Adrenal gland (tissue), 19 donors: ENCODE measurements at regions of chr2 and their contacts with region 1.

Region 1: GRCh38 chr2:190382851-190383250 is 25.3 kb upstream of the MFSD6 start:
- DNase-seq: peak in 5 of 7 donors; percentile 29 to 62 (median 52)
- H3K4me3 ChIP-seq: no peak overlapping the region
- H3K27ac ChIP-seq: no peak overlapping the region
- H3K4me1 ChIP-seq: no peaks in the 10 kb centered on the region
- H3K27me3 ChIP-seq: no peaks in the 10 kb centered on the region
- CTCF ChIP-seq: peak; percentile 16 to 74 (median 65)
- POLR2A ChIP-seq: no peak

Region 2: DNA sequence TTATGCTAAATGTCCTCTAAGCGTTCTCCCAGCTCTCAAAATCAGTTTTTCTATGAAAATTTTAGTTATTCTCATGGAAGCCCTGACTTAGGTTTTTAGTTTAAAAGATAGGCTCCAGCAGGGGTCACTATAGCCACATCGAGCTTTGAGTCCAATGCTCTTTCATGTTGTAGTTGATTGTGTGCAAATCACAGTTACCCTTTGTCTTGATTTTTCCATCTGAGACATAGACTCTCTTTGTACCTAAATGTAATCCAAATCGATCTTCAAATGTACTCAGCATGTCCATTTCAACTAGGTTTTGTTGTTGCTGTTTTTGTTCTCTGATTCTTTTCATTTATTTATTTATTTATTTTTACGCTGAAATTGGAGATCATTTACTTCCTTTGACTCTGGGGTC is 293.9 kb before region 1 on chr2:
- intact Hi-C with region 1: loop called in 1 of 2 experiments (anchors 10 kb)
- DNase-seq: peak; percentile 38 to 75 (median 52)
- H3K4me3 ChIP-seq: no peak overlapping the region
- H3K27ac ChIP-seq: no peak overlapping the region
- H3K4me1 ChIP-seq: peaks cover 0 to 15% of the 10 kb centered on the region in 2 donors
- H3K27me3 ChIP-seq: no peaks in the 10 kb centered on the region
- CTCF ChIP-seq: peak; percentile 64 to 82 (median 72)
- POLR2A ChIP-seq: no peak

Region 3: DNA sequence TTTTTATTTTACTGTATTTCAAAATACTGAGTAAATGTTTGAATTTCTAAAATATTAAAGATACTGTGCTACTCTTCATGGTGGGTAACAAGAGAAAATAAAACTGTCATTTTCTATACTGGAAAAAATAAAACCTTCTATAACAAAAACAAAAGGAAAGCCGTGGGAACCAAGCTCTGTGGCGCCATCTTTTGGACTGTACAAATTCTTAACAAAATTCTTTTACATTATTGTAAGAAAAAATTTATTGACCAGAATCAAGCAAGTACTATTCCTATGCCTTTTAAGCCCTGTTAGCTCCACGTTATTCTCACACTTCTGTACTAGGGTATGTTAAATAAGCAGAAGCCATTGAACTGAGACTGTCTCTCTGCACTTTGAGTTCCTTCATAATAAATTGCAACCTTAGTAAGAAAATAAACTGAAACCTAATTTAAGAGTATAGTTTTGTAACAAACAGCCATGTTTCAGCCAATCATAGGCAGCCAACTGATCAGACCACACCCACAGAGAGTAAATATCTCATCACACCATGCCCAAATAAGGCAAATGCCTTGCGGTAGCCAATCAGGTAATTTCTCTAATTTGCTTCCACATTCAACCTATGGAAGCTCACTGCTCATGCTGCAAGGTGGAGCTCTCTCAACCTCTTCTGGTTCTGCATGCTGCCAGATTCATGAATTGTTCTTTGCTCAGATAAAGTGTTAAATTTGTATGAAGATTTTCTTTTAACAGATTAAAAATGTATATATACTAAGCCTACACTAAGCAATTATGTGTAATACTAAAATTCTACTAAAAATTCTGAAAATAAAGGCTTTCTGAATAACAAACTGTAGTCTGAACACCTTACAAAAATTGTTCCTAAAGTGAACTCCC is 105.4 kb before region 1 on chr2:
- intact Hi-C with region 1: no loop called
- DNase-seq: peak in 3 of 7 donors; percentile 25 to 62 (median 49)
- H3K4me3 ChIP-seq: no peak overlapping the region
- H3K27ac ChIP-seq: no peak overlapping the region
- H3K4me1 ChIP-seq: peaks cover 0 to 5% of the 10 kb centered on the region in 2 donors
- H3K27me3 ChIP-seq: no peaks in the 10 kb centered on the region
- CTCF ChIP-seq: peak; percentile 32 to 65 (median 50)
- POLR2A ChIP-seq: no peak

Region 4: GRCh38 chr2:190319555-190320498 is 63.0 kb before region 1 on chr2 and contains the start of gene HIBCH:
- intact Hi-C with region 1: loop called in 1 of 2 experiments (anchors 10 kb)
- DNase-seq: peak; percentile 98 to 99 (median 98)
- H3K4me3 ChIP-seq: peak within 1 kb of the TSS in 2 of 4 donors; percentile 77 to 85
- H3K27ac ChIP-seq: peak within 1 kb of the TSS; percentile 23 to 98 (median 86)
- H3K4me1 ChIP-seq: peaks cover 17 to 27% of the 10 kb centered on the region in 2 donors
- H3K27me3 ChIP-seq: no peaks in the 10 kb centered on the region
- CTCF ChIP-seq: peak; percentile 62 to 79 (median 70)
- POLR2A ChIP-seq: peak; percentile 43 to 92
- total RNA-seq, gene HIBCH: 35.1 to 174 (median 68.6) TPM

Region 5: DNA sequence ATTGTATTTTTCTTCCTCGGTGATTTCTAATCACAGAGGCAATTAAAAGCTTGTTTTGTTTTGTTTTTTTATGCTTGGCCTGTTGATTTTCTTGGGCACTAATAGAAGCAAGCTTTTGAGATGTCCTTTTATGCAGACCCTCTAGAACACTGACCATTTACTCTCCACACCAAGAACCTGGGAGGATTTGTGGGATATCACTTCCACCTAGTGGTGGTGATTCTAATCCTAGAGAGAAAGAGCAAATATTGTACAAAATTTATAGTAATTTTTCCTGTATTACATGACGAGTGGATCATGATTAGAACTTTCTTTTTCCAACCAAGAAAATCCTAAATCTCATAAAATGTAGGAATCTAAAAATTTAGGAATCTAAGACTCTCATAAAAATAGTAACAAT is 128.3 kb after region 1 on chr2:
- intact Hi-C with region 1: loop called (anchors 5 to 10 kb)
- DNase-seq: no peak
- H3K4me3 ChIP-seq: no peak overlapping the region
- H3K27ac ChIP-seq: no peak overlapping the region
- H3K4me1 ChIP-seq: peaks cover 0 to 14% of the 10 kb centered on the region in 2 donors
- H3K27me3 ChIP-seq: no peaks in the 10 kb centered on the region
- CTCF ChIP-seq: peak; percentile 33 to 69 (median 55)
- POLR2A ChIP-seq: no peak

Region 6: DNA sequence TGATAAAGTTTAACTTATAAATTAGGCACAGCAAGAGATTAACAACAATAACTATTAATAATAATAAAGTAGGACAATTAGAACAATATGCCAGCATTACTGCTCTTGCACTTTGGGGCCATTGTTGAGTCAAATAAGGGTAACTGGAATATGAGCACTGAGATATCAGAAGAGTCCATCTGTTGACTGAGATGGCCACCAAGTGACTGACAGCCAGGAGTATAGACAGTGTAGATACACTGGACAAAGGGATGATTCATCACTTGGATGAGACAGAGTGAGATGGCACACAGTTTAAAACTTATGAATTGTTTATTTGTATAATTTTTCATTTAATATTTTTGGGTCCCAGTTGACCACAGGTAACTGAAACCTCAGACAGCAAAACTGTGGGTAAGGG is 286.0 kb after region 1 on chr2:
- intact Hi-C with region 1: no loop called
- DNase-seq: no peak
- H3K4me3 ChIP-seq: no peak overlapping the region
- H3K27ac ChIP-seq: no peak overlapping the region
- H3K4me1 ChIP-seq: peaks cover 0 to 10% of the 10 kb centered on the region in 2 donors
- H3K27me3 ChIP-seq: no peaks in the 10 kb centered on the region
- CTCF ChIP-seq: no peak
- POLR2A ChIP-seq: no peak

Region 7: DNA sequence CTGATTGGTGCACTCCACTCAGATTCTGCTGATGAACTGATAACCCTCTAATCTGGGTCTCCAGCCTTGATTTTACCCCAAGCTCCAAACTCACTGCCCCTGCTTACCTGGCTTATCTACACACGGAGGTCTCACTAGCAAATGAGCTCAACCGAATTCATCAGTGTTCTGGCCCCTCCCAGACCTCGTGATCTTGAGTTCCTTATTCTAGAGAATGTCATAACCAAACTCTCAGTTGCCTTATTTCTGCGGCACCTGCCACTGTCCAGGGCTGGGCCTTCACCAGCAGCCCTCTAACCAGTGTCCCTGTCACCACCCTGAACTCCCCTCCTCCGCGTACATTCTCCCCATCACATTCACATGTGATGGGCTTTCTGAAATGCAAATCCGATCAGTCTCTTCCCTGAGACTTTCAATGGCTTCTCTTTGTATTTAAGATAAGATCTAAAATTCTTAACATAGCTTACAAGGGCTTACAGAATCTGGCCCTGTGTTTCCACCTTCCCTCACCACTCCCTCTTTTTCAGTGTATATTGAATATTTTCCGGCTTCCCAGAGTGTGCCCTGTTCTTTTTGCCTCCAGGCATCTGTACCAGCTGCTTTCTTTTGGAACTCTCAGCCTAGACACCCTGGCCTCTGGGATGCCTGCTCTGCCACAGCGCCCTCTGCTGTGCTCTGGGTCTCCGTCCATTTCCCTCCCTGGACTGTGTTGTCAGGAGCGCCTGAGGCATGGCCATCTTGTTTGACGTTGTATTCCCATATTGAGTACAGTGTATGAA is 297.2 kb after region 1 on chr2:
- intact Hi-C with region 1: no loop called
- DNase-seq: peak; percentile 42 to 86 (median 62)
- H3K4me3 ChIP-seq: no peak overlapping the region
- H3K27ac ChIP-seq: no peak overlapping the region
- H3K4me1 ChIP-seq: peaks cover 0 to 10% of the 10 kb centered on the region in 2 donors
- H3K27me3 ChIP-seq: no peaks in the 10 kb centered on the region
- CTCF ChIP-seq: peak; percentile 33 to 69 (median 58)
- POLR2A ChIP-seq: no peak